MCF 10A (cell line): ENCODE measurements at regions of chr10 and their contacts with region 1.

Region 1: GRCh38 chr10:69375307-69376151 is 41.2 kb downstream of the TACR2 start:
- DNase-seq: peak; percentile 92
- H3K4me3 Mint-ChIP-seq: peak overlapping the region; percentile 38
- H3K27ac Mint-ChIP-seq: peak overlapping the region; percentile 83
- H3K4me1 Mint-ChIP-seq: peaks cover 45% of the 10 kb centered on the region
- H3K27me3 Mint-ChIP-seq: no peaks in the 10 kb centered on the region
- CTCF ChIP-seq: no peak

Region 2: DNA sequence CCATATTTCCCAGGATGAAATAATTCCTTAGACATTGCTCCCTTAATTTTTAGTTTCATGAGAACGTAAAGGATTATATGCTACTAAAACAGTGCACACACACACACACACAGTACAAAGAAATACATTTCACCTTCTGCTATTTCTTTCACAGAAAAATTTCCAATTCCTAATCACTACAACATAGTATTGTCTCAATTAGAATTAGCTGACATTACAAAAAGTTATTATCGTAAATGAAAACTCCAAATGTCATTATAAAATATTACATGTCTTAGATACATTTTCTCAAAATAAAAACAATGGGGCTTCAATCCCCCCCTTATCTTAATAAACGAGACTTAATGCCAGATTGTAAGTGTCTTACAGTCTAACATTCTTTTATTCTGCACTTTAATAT is 956.2 kb before region 1 on chr10:
- CTCF ChIA-PET with region 1: no interaction called
- POLR2A ChIA-PET with region 1: no interaction called
- intact Hi-C with region 1: no loop called
- DNase-seq: no peak
- H3K4me3 Mint-ChIP-seq: no peak overlapping the region
- H3K27ac Mint-ChIP-seq: no peak overlapping the region
- H3K4me1 Mint-ChIP-seq: no peaks in the 10 kb centered on the region
- H3K27me3 Mint-ChIP-seq: no peaks in the 10 kb centered on the region
- CTCF ChIP-seq: no peak

Region 3: GRCh38 chr10:69237528-69238159 is 137.9 kb before region 1 on chr10:
- CTCF ChIA-PET with region 1: interaction called, 11 read pairs
- POLR2A ChIA-PET with region 1: interaction called, 7 read pairs
- intact Hi-C with region 1: no loop called
- DNase-seq: peak; percentile 83
- H3K4me3 Mint-ChIP-seq: no peak overlapping the region
- H3K27ac Mint-ChIP-seq: no peak overlapping the region
- H3K4me1 Mint-ChIP-seq: peaks cover 23% of the 10 kb centered on the region
- H3K27me3 Mint-ChIP-seq: no peaks in the 10 kb centered on the region
- CTCF ChIP-seq: peak; percentile 89

Region 4: DNA sequence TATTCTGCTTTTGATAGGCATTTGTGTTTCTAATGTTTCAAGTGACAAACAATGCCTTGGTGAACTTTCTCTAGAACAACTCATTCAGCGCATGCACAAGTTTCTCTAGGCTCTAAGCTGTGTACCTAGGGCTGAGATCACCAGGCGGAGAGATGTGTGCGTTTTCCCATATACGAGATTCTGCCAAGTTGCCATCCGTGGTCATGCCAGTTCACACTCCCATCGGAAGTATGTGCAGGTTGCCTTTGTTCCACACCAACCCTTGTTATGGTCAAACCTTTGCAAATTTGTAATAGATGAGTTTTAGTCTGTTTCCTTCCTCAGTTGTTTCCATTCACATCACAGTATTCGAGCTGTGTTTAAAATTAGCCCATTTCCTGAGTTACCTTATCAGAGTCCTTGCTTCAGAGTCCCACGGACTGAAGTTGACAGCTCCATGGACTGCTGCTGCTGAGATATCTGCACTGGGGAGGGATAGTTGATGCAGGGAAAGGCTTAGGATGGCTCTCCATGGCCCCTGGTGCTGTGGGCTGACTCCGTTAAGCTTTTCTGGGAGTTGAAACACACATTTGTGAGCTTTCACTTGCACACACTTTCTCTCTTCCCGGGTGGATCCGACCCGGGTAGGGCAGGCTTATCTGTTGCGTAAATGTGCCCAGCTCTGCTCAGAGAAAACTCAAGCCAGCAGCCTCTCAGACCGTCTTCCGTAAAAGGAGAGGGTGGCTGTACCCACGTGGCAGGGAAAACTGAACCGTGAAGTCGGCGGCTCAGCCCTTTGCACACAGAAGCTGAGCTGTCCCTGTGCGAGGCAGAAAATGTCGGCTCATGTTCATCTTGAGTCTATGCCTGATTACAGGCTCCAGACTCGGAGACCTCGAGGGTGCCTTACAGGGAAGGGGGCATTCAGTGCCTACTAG is 47.8 kb before region 1 on chr10:
- CTCF ChIA-PET with region 1: no interaction called
- POLR2A ChIA-PET with region 1: interaction called, 24 read pairs
- intact Hi-C with region 1: no loop called
- DNase-seq: peak; percentile 79
- H3K4me3 Mint-ChIP-seq: peak overlapping the region; percentile 69
- H3K27ac Mint-ChIP-seq: peak overlapping the region; percentile 88
- H3K4me1 Mint-ChIP-seq: peaks cover 47% of the 10 kb centered on the region
- H3K27me3 Mint-ChIP-seq: no peaks in the 10 kb centered on the region
- CTCF ChIP-seq: no peak

Region 5: DNA sequence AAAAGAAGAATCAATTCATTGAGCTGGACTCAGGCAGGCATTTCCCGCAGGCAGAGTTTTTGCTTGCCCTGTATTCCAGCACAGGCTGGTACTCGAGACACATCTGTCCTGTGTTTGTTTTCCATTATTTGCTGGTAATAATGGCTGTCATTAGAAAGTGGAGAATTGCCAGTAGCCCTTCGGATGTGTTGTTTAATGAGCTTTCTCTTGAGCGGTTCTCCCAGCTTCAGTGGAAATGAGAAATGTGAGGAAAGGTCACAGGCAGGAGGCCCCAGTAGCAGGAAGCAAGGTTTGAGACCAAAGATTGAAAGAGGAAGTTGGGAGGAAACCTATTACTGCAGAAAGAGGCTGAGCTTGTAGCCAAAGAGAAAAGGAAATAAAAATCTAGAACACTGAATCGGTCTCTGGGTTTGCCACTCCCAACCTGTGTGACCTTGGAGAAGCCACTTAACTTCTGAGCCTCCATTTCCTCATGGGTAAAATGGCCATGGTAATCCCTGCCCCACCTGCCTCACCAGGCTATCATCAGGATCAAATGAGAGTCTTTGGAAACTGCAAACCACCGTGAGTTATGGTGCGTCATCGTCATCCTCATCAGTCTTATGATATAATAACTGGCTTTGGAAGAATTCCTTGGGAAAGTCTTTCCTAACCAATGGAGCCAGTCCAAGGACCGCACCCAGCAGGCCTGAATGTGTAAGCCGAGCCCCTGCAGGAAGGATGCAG is 26.6 kb before region 1 on chr10:
- CTCF ChIA-PET with region 1: interaction called, 4 read pairs
- POLR2A ChIA-PET with region 1: interaction called, 18 read pairs
- intact Hi-C with region 1: no loop called
- DNase-seq: peak; percentile 96
- H3K4me3 Mint-ChIP-seq: no peak overlapping the region
- H3K27ac Mint-ChIP-seq: peak overlapping the region; percentile 93
- H3K4me1 Mint-ChIP-seq: peaks cover 25% of the 10 kb centered on the region
- H3K27me3 Mint-ChIP-seq: no peaks in the 10 kb centered on the region
- CTCF ChIP-seq: no peak

Region 6: DNA sequence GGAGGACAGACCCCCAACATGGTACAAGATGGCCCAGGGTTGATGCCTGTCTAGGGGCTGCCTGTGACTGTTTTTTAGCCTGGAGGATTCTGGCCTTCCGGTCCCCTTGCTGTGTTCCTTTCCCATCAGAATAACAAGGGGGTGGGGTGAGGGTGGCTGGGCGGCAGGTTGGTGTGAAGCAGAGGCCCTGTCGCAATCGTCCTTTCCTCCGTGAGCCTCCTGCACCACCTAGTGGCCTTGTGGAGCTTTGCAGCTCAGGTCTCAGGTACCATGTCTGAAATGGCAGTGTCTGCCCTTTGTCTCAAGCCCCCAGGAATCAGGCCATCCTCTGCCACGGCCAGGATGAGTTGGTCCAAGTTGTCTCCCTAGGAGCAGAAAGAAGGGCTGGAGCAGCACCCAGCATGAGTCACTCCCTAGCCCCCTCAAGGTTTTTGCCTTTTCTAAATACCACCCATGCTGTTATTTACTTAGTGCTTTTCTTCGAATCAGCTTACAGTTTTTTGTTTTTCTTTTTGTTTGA is 17.0 kb after region 1 on chr10:
- CTCF ChIA-PET with region 1: interaction called, 13 read pairs
- POLR2A ChIA-PET with region 1: interaction called, 18 read pairs
- intact Hi-C with region 1: no loop called
- DNase-seq: peak; percentile 90
- H3K4me3 Mint-ChIP-seq: no peak overlapping the region
- H3K27ac Mint-ChIP-seq: peak overlapping the region; percentile 51
- H3K4me1 Mint-ChIP-seq: peaks cover 19% of the 10 kb centered on the region
- H3K27me3 Mint-ChIP-seq: no peaks in the 10 kb centered on the region
- CTCF ChIP-seq: peak; percentile 96

Region 7: GRCh38 chr10:69425511-69426298 is 50.2 kb after region 1 on chr10:
- CTCF ChIA-PET with region 1: no interaction called
- POLR2A ChIA-PET with region 1: no interaction called
- intact Hi-C with region 1: no loop called
- DNase-seq: no peak
- H3K4me3 Mint-ChIP-seq: no peak overlapping the region
- H3K27ac Mint-ChIP-seq: no peak overlapping the region
- H3K4me1 Mint-ChIP-seq: peaks cover 12% of the 10 kb centered on the region
- H3K27me3 Mint-ChIP-seq: no peaks in the 10 kb centered on the region
- CTCF ChIP-seq: no peak